ENCODE measurements at regions of chr7 and their contacts with region 1.

Region 1: DNA sequence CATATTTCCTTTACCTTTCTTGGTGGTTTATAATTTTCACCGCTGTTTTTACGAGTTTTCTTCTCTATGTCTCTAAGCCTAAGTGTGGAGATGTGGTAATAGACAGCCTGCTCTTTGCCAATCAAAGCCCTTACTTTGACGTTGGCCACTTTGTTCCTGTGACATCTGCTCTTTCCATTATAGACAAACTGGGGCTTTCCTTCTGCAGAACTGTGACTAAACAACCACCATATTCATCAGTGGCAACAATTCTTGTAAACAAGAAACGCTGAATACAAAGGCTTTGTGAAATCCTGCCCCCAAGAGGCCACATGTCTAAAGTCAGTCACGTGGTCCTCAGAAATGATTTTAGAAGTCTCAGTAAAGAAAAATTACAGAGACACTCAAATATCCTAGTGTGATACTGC is 59.6 kb upstream of the CAPZA2 start:
- DNase-seq: peak; percentile 28 to 37
- ATAC-seq: peak; percentile 18 to 27
- H3K4me3 ChIP-seq: no peak overlapping the region
- H3K27ac ChIP-seq: peak overlapping the region; percentile 81 to 93 (median 88)
- H3K4me1 ChIP-seq: peaks cover 45 to 52% of the 10 kb centered on the region in 2 donors
- H3K27me3 ChIP-seq: no peaks in the 10 kb centered on the region
- CTCF ChIP-seq: peak; percentile 18 to 32 (median 31)
- POLR2A ChIP-seq: no peak

Region 2: DNA sequence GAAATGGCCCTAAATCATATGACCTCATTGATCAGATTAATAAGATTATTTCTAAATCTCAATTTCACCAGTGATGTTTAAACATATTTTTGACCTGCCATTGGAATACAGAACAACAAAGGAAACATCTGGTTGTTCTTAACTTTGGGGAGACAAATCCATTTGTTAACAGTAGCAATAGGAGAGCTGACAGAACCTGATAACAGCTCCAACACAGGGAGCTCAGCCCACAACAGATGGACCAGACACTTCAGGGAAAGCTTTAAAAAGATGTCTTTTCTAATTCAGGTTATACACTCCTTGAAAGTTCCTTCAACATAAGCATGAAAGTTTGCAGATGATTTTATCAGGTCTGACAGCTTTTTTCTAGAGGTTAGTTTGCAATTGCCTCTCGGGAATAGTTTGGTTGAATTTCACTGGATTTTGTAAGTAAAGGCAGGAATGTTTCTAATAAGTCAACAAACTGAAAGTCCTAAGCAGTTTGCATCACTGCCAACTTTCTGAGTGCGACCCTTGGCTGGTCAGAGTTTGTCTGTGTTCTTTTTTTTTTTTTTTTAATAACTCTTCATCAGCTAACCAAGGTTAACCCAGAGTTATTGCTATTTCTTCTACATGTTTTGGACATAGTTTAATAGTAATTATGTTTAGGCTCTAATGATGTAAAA is 137.3 kb before region 1 on chr7:
- in situ Hi-C with region 1: loop called in 2 of 4 experiments (anchors 5 kb)
- intact Hi-C with region 1: no loop called
- DNase-seq: no peak
- ATAC-seq: no peak
- H3K4me3 ChIP-seq: no peak overlapping the region
- H3K27ac ChIP-seq: no peak overlapping the region
- H3K4me1 ChIP-seq: peaks cover 12 to 14% of the 10 kb centered on the region in 2 donors
- H3K27me3 ChIP-seq: no peaks in the 10 kb centered on the region
- CTCF ChIP-seq: no peak
- POLR2A ChIP-seq: no peak

Region 3: GRCh38 chr7:116715077-116715476 is 87.7 kb before region 1 on chr7:
- in situ Hi-C with region 1: no loop called
- intact Hi-C with region 1: loop called (anchors 5 kb)
- DNase-seq: no peak
- ATAC-seq: no peak
- H3K4me3 ChIP-seq: no peak overlapping the region
- H3K27ac ChIP-seq: peak overlapping the region in 3 of 4 donors; percentile 65 to 82 (median 79)
- H3K4me1 ChIP-seq: peaks cover 20 to 24% of the 10 kb centered on the region in 2 donors
- H3K27me3 ChIP-seq: no peaks in the 10 kb centered on the region
- CTCF ChIP-seq: no peak
- POLR2A ChIP-seq: no peak

Region 4: GRCh38 chr7:116876664-116877442 is 74.1 kb after region 1 on chr7:
- in situ Hi-C with region 1: no loop called
- intact Hi-C with region 1: no loop called
- DNase-seq: peak in 1 of 2 donors; percentile 7
- ATAC-seq: peak; percentile 78 to 84
- H3K4me3 ChIP-seq: no peak overlapping the region
- H3K27ac ChIP-seq: peak overlapping the region; percentile 38 to 79 (median 69)
- H3K4me1 ChIP-seq: peaks cover 47 to 65% of the 10 kb centered on the region in 2 donors
- H3K27me3 ChIP-seq: no peaks in the 10 kb centered on the region
- CTCF ChIP-seq: no peak
- POLR2A ChIP-seq: peak in 1 of 2 donors; percentile 20

Region 5: DNA sequence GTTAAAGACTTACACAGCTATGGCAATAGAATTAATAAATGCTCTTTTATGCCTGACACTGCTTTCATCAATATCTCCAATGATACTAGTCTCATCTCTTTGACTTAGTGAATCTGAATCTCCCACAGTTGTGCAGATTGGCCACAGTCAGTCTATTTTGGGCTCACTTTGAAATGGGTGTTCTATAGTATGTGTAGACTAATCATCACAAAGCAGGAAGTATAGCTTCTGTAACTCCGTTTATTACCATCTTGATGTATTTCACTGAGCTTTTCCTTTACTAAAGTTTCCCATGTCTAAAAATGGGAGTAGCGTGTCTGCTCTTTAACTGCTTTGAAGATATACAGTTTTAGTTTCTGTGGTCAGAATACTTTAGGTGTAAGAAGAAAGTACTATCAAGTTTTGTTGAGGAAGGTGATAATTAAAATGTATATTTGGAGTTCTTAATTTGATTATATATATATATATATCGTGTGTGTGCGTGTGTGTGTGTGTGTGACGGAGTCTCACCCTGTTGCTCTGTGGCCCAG is 220.6 kb after region 1 on chr7:
- in situ Hi-C with region 1: no loop called
- intact Hi-C with region 1: no loop called
- DNase-seq: no peak
- ATAC-seq: no peak
- H3K4me3 ChIP-seq: no peak overlapping the region
- H3K27ac ChIP-seq: no peak overlapping the region
- H3K4me1 ChIP-seq: peaks cover 48 to 61% of the 10 kb centered on the region in 2 donors
- H3K27me3 ChIP-seq: no peaks in the 10 kb centered on the region
- CTCF ChIP-seq: no peak
- POLR2A ChIP-seq: no peak